ENCODE measurements at regions of chr2 and their contacts with region 1.

Region 1: DNA sequence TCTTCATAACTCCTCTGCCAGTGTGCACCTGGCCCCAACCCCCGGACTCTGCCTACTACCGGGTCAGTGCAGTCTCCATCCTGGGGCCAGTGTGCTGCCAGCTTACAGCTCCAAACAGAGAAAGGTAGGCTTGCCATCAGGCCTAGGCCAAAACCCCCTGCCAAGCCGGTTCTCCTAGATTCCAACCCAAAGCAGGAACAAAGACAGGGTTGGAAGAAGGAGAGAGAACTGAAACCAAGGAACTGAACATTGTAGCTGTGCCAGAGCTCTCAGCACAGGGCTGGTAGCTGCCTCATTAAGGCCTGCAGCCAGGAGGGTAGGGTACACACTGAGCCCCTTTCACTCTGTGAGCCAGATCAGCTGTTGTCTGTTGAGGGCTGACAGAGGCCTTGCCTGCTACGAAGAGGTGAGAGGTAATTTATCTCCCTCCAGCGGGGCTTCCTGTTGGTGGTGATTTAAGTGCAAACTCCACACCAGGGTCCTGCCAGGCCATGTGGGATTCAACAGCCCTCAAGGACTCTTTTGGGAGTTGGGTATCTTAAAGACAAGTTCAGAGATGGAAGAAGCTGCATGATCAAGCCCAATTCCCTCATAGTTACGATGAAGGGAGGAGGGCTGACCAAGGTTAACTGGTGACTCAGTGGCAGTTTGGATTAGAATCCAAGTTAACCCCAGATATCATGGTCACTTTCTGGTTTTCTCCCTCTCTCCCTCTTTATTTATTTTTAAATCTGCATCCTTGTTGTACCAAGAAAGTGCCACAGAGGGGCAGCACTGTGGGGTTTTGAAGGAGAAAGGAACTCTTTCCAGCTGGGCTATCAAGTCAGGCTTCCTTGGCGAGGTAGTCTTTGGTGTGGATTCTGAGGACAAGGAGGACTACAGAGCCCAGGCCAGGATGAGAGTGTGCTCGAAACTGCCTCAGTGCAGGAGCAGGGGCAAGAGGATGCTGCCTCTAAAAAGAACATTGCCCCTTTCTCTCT is 48.1 kb downstream of the CYRIA start:
- DNase-seq: peak; percentile 54
- ATAC-seq: peak; percentile 83
- H3K4me3 Mint-ChIP-seq: no peak overlapping the region
- H3K27ac Mint-ChIP-seq: no peak overlapping the region; the same call in 1 of the 2 replicates
- H3K4me1 Mint-ChIP-seq: peaks cover 26% of the 10 kb centered on the region
- H3K27me3 Mint-ChIP-seq: no peaks in the 10 kb centered on the region
- CTCF ChIP-seq: peak; percentile 43

Region 2: DNA sequence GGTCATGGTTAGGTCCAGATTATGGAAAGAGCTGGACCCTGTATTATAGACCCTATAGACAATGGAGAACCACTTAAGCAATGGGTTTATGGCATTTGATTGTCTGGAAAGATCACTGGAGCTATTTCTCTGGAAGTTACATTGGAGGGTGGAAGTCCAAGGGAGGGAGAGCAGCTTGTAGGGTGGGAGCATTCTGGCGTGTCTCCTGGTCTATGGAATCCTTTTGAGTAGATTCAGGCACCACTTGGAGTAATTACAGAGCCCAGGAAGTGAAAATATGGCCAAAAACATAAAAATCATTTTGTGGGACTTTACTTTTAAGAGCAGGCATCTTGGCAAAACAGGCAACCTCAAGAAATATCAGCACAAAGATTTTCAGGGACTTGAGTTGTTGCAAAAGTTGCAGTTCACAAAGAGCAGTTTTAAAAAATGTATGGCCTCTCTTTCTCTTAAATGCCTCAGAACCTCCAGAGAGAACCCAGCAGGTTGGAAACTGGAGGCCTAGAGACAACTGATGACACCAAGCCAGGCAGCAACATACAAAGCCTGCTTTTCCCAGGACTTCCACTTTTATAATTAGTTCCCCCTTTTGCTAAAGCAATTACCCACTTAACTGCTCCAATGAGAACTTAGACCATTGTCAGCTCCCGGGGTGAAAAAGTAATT is 346.2 kb before region 1 on chr2:
- CTCF ChIA-PET with region 1: no interaction called
- POLR2A ChIA-PET with region 1: no interaction called
- DNase-seq: no peak
- ATAC-seq: no peak
- H3K4me3 Mint-ChIP-seq: no peak overlapping the region
- H3K27ac Mint-ChIP-seq: no peak overlapping the region
- H3K4me1 Mint-ChIP-seq: peaks cover 7% of the 10 kb centered on the region
- H3K27me3 Mint-ChIP-seq: no peaks in the 10 kb centered on the region
- CTCF ChIP-seq: no peak

Region 3: DNA sequence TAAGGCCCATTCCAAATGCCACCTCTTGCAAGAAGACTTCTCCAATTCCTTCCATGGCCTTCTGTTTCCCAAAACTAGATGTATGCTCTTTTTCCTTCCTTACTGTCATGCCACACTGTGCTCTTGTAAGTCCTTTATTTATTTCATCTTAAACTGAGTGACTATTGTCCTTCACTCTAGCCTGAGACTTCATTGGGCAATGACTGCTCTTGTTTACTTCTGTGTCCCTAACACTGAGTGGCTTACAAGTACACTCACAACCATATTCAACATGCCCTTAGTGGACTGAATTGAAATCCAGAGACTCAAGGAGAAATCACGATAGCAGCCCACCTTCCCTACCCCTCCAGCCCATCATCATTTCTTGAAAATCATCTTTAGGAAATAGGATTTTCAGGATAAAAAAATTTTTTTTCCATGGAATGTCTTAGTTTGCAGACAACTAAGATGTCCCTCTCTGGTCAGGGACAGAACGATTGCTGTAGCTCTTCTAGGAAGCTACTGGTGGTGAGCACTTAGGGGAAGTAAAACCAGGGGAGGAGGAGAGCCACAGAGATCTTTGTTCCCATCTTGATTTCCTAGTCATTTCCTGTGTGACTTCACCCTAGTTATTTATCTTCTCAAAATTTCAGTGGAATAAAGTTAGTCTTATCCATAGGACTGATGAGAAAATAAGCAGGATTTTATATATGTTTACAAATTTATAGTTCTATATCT is 32.6 kb before region 1 on chr2:
- CTCF ChIA-PET with region 1: no interaction called
- POLR2A ChIA-PET with region 1: no interaction called
- DNase-seq: no peak
- ATAC-seq: no peak
- H3K4me3 Mint-ChIP-seq: no peak overlapping the region
- H3K27ac Mint-ChIP-seq: no peak overlapping the region
- H3K4me1 Mint-ChIP-seq: peaks cover 22% of the 10 kb centered on the region
- H3K27me3 Mint-ChIP-seq: no peaks in the 10 kb centered on the region
- CTCF ChIP-seq: no peak

Region 4: GRCh38 chr2:16722677-16723076 is 105.1 kb after region 1 on chr2:
- CTCF ChIA-PET with region 1: interaction called, 13 read pairs
- POLR2A ChIA-PET with region 1: no interaction called
- DNase-seq: peak; percentile 67
- ATAC-seq: peak; percentile 98
- H3K4me3 Mint-ChIP-seq: no peak overlapping the region
- H3K27ac Mint-ChIP-seq: no peak overlapping the region
- H3K4me1 Mint-ChIP-seq: peaks cover 12% of the 10 kb centered on the region
- H3K27me3 Mint-ChIP-seq: no peaks in the 10 kb centered on the region
- CTCF ChIP-seq: no peak

Region 5: GRCh38 chr2:16756831-16757644 is 139.5 kb after region 1 on chr2:
- CTCF ChIA-PET with region 1: interaction called, 118 read pairs
- POLR2A ChIA-PET with region 1: no interaction called
- DNase-seq: peak; percentile 81
- ATAC-seq: peak; percentile 96
- H3K4me3 Mint-ChIP-seq: no peak overlapping the region
- H3K27ac Mint-ChIP-seq: peak overlapping the region; percentile 85; the same call in 1 of the 2 replicates
- H3K4me1 Mint-ChIP-seq: peaks cover 2% of the 10 kb centered on the region
- H3K27me3 Mint-ChIP-seq: no peaks in the 10 kb centered on the region; the same call in 1 of the 2 replicates
- CTCF ChIP-seq: peak; percentile 95